ENCODE measurements at regions of chr12 and their contacts with region 1.

Region 1: GRCh38 chr12:48851883-48852733 is at the start of gene DDX23:
- DNase-seq: peak; percentile 97
- H3K4me3 ChIP-seq: peak within 1 kb of the TSS; percentile 98
- H3K27ac ChIP-seq: peak within 1 kb of the TSS; percentile 67
- H3K4me1 ChIP-seq: peaks cover 32% of the 10 kb centered on the region
- CTCF ChIP-seq: no peak
- total RNA-seq, gene DDX23: 91.1 and 101 TPM in 2 replicates

Region 2: DNA sequence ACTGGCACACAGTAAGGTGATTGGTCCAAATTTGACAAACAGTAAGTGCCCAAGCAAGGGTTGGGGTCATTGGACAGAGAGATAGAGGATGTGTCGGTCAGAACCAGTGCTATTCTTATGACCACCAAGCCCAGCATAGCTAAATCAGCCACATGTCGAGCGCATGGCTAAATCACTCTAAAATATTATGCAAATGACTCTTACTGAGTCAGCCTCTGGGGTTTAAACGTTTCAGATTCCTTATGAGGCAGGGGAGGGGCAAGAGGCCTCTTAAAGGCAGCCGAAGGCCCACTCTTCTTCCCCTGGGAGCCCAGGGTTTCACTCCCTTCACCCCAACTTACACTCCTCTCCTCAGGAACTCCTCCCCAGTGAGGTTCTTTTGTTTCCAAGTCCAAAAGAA is 1126.2 kb before region 1 on chr12:
- CTCF ChIA-PET with region 1: no interaction called
- POLR2A ChIA-PET with region 1: no interaction called
- intact Hi-C with region 1: no loop called
- DNase-seq: peak; percentile 27
- H3K4me3 ChIP-seq: no peak overlapping the region
- H3K27ac ChIP-seq: no peak overlapping the region
- H3K4me1 ChIP-seq: peaks cover 19% of the 10 kb centered on the region
- CTCF ChIP-seq: no peak

Region 3: DNA sequence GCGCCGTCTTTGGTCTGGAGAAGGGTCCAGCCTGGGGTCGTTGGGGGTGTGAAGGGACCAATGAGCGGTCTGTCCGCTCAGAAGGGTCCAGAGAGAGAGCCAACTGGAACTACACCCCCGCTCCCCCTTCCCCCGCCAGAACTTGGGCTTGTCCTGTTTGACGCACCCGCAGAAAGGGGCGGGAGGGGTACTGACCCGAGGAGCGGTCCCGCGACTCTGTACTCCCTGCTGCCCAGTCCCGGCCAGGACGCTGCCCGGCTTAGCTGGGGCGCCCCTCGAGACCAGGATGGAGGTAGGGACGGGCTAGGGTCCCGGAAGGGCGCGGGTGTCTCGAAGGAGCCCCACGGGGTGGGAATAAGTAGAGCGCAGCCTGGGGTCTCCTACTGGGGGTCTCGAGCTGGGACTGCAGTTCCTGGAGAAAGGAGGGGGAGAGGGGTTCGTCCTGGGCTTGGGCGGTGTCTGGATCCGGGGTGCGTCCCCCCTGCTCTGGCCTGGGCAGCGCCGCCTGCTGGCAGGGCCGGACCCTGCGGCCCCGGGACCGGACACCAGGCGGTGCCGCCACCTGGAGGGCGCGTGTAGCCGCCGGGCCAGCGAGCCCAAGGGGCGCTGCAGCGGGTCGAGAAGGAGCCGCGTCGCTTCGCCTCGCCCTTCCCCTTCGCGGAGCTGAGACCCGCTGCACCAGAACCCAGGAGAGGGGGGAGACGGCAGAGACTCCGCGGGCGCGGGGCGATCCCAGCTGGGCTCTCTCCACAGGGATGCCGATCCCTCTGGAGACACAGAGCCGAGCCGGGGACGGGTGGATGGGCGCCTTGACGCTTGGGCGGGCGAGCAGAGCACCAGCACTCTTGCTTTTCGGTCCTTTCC is 37.6 kb before region 1 on chr12:
- CTCF ChIA-PET with region 1: no interaction called
- POLR2A ChIA-PET with region 1: interaction called, 9 read pairs
- intact Hi-C with region 1: loop called (anchors 2 kb)
- DNase-seq: peak; percentile 90
- H3K4me3 ChIP-seq: peak overlapping the region; percentile 72
- H3K27ac ChIP-seq: peak overlapping the region; percentile 60
- H3K4me1 ChIP-seq: peaks cover 27% of the 10 kb centered on the region
- CTCF ChIP-seq: peak; percentile 98

Region 4: GRCh38 chr12:48865434-48866290 is 13.6 kb after region 1 on chr12 and contains the start of gene RND1:
- CTCF ChIA-PET with region 1: interaction called, 6 read pairs
- POLR2A ChIA-PET with region 1: interaction called, 47 read pairs
- intact Hi-C with region 1: no loop called
- DNase-seq: peak; percentile 98
- H3K4me3 ChIP-seq: peak within 1 kb of the TSS; percentile 86
- H3K27ac ChIP-seq: peak within 1 kb of the TSS; percentile 45
- H3K4me1 ChIP-seq: peaks cover 36% of the 10 kb centered on the region
- CTCF ChIP-seq: peak; percentile 50
- total RNA-seq, gene RND1: 6.5 and 7.3 TPM in 2 replicates

Region 5: DNA sequence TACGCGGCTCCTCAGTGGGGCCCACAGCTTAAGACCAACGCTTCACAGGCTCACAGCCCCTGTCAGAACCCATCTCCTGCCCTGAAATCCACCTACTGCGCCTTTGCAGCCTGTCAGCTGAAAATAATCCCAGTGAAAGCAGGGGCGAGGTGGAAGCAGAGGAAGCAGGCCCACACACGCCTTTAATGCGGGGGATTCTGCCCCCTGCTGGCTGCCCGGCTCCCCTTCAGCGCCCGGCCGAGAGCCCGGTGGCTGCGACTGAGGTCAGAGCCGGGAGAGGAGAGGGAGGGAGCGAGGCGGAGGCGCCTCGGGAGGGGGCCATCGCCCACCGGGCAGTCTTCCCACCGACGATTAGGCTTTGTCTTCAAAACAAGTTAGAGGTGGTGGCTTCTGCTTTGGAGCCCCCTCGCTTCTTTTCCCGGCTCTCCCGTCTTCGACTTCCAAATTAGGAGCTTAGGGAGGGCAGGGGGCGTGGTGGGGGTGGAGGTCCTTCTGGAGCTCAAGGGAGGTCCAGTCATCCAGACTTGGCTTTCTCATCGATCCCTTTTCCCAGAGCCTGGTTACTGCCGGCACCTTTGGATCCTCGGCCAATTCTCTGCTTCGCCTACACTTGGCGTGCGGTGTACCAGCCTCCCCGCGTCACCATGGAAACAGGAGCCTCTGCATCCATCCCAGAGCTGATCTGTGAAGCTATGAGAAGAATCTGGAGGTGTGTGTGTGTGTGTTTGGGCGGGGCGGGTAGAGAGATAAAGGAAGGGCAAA is 38.7 kb after region 1 on chr12:
- CTCF ChIA-PET with region 1: interaction called, 35 read pairs
- POLR2A ChIA-PET with region 1: interaction called, 36 read pairs
- intact Hi-C with region 1: loop called (anchors 1 kb)
- DNase-seq: peak; percentile 77
- H3K4me3 ChIP-seq: peak overlapping the region; percentile 30
- H3K27ac ChIP-seq: no peak overlapping the region
- H3K4me1 ChIP-seq: peaks cover 6% of the 10 kb centered on the region
- CTCF ChIP-seq: peak; percentile 95

Region 6: GRCh38 chr12:48936379-48936979 is 84.4 kb after region 1 on chr12:
- CTCF ChIA-PET with region 1: no interaction called
- POLR2A ChIA-PET with region 1: no interaction called
- intact Hi-C with region 1: loop called (anchors 1 kb)
- DNase-seq: peak; percentile 74
- H3K4me3 ChIP-seq: no peak overlapping the region
- H3K27ac ChIP-seq: no peak overlapping the region
- H3K4me1 ChIP-seq: no peaks in the 10 kb centered on the region
- CTCF ChIP-seq: peak; percentile 98

Region 7: GRCh38 chr12:48988030-48988649 is 136.0 kb after region 1 on chr12:
- CTCF ChIA-PET with region 1: no interaction called
- POLR2A ChIA-PET with region 1: no interaction called
- intact Hi-C with region 1: loop called (anchors 2 kb)
- DNase-seq: peak; percentile 69
- H3K4me3 ChIP-seq: no peak overlapping the region
- H3K27ac ChIP-seq: no peak overlapping the region
- H3K4me1 ChIP-seq: peaks cover 9% of the 10 kb centered on the region
- CTCF ChIP-seq: peak; percentile 98

Region 8: GRCh38 chr12:49842519-49843352 is 990.6 kb after region 1 on chr12 and contains the start of gene BCDIN3D:
- CTCF ChIA-PET with region 1: no interaction called
- POLR2A ChIA-PET with region 1: no interaction called
- intact Hi-C with region 1: loop called (anchors 10 kb)
- DNase-seq: peak; percentile 89
- H3K4me3 ChIP-seq: peak within 1 kb of the TSS; percentile 92
- H3K27ac ChIP-seq: peak within 1 kb of the TSS; percentile 74
- H3K4me1 ChIP-seq: peaks cover 34% of the 10 kb centered on the region
- CTCF ChIP-seq: no peak
- total RNA-seq, gene BCDIN3D: 7.5 and 8.4 TPM in 2 replicates

Measured in OCI-LY7 (cell line).